Body of pancreas (tissue), 4 donors: ENCODE measurements at regions of chr7 and their contacts with region 1.

Region 1: GRCh38 chr7:155190688-155191087 is 107.0 kb upstream of the INSIG1 start:
- DNase-seq: peak; percentile 52 to 78 (median 63)
- ATAC-seq: peak; percentile 89
- H3K4me3 ChIP-seq: no peak overlapping the region
- H3K27ac ChIP-seq: peak overlapping the region in 1 of 4 donors; percentile 29
- H3K4me1 ChIP-seq: peaks cover 6% of the 10 kb centered on the region
- H3K27me3 ChIP-seq: no peaks in the 10 kb centered on the region
- CTCF ChIP-seq: peak; percentile 88 to 98 (median 95)
- POLR2A ChIP-seq: no peak

Region 2: DNA sequence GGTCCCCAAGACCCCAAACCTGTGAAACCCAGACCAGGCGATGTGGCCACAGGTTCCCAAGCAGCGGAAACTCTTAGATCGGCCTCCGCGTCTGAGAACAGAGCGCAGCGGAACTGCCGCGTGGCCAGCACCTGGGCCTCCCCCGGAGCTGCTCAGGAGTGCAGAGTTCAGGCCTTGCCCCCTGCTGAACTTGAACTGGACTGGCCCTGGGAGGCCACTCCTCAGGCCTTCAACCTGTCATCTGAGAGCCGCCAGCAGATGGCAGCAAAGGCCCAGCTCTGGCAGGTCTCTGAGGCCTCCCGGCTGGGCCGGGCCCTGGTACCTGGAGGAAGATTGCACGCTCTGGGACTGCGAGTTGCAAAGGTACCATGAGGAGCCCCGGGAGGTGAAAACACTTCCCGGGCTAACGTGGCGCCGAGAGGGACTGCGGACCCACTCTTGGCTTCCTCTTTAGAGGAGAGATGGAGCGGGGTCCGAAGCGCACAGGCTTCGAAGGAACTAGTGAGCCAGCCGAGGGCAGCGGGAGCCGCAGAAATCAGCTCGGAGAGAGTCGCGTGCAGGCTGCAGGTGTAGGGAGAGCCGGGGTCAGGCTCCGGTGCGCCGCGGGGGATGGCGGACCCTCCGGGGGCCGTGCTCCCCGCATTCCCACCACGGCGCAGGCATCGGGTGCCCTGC is 276.9 kb before region 1 on chr7:
- intact Hi-C with region 1: loop called (anchors 10 kb)
- DNase-seq: peak; percentile 90 to 96 (median 92)
- ATAC-seq: peak; percentile 95
- H3K4me3 ChIP-seq: no peak overlapping the region
- H3K27ac ChIP-seq: no peak overlapping the region
- H3K4me1 ChIP-seq: peaks cover 7% of the 10 kb centered on the region
- H3K27me3 ChIP-seq: no peaks in the 10 kb centered on the region
- CTCF ChIP-seq: peak; percentile 78 to 93 (median 90)
- POLR2A ChIP-seq: no peak